CD4-positive, alpha-beta T cell (primary cell): ENCODE measurements at regions of chr19 and their contacts with region 1.

Region 1: GRCh38 chr19:14136509-14137281 is at the start of gene ASF1B:
- DNase-seq: peak; percentile 91 to 99 (median 97)
- ATAC-seq: peak; percentile 80
- H3K4me3 ChIP-seq: peak within 1 kb of the TSS; percentile 86
- H3K4me3 Mint-ChIP-seq: peak within 1 kb of the TSS; percentile 97
- H3K27ac ChIP-seq: peak within 1 kb of the TSS; percentile 92 to 94
- H3K27ac Mint-ChIP-seq: peak within 1 kb of the TSS; percentile 87
- H3K4me1 ChIP-seq: peaks cover 34% of the 10 kb centered on the region
- H3K4me1 Mint-ChIP-seq: peaks cover 34% of the 10 kb centered on the region
- H3K27me3 ChIP-seq: no peaks in the 10 kb centered on the region
- H3K27me3 Mint-ChIP-seq: no peaks in the 10 kb centered on the region
- CTCF ChIP-seq: peak; percentile 99
- total RNA-seq, gene ASF1B: 0.59 to 0.77 TPM

Region 2: DNA sequence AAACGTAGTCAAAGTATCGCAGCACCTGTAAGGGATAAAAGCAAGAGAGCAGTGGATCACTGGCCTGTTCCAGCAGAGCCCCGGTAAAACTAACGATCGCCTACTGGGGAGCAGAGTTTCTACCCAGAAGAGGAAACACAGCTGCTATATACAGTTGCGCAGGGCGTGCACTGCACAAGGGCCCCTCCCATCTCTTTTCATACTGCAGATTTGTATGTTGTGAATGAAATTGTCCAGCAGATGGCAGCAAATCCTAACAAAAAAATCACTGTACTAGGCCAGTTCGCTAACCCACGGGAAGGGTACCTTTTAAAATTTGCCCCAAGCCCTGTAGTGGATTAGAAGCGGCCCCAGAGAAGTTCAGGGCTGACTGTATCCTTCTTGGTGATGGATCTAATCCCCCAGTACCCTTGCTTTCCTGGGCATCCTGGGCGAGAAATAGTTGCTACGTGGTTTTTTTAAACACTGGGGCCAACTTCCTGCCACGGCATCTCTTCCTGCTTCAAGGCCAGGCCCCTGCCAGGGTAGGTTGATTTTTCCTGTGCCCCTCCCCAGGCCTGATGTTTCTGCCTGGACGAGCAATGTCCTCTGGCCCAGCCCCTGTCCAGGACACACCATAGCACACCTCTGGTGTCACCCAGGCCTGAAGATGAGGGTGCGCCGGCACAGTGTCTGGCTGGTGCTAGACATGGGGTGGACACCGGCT is 859.4 kb before region 1 on chr19:
- CTCF ChIA-PET with region 1: no interaction called
- POLR2A ChIA-PET with region 1: no interaction called
- intact Hi-C with region 1: loop called in 1 of 2 experiments (anchors 5 kb)
- DNase-seq: peak; percentile 22 to 90 (median 48)
- ATAC-seq: peak; percentile 89
- H3K4me3 ChIP-seq: peak overlapping the region; percentile 15
- H3K4me3 Mint-ChIP-seq: peak overlapping the region; percentile 42
- H3K27ac ChIP-seq: peak overlapping the region in 1 of 2 donors; percentile 66
- H3K27ac Mint-ChIP-seq: peak overlapping the region; percentile 65
- H3K4me1 ChIP-seq: peaks cover 29% of the 10 kb centered on the region
- H3K4me1 Mint-ChIP-seq: peaks cover 22% of the 10 kb centered on the region
- H3K27me3 ChIP-seq: no peaks in the 10 kb centered on the region
- H3K27me3 Mint-ChIP-seq: no peaks in the 10 kb centered on the region
- CTCF ChIP-seq: peak; percentile 68

Region 3: DNA sequence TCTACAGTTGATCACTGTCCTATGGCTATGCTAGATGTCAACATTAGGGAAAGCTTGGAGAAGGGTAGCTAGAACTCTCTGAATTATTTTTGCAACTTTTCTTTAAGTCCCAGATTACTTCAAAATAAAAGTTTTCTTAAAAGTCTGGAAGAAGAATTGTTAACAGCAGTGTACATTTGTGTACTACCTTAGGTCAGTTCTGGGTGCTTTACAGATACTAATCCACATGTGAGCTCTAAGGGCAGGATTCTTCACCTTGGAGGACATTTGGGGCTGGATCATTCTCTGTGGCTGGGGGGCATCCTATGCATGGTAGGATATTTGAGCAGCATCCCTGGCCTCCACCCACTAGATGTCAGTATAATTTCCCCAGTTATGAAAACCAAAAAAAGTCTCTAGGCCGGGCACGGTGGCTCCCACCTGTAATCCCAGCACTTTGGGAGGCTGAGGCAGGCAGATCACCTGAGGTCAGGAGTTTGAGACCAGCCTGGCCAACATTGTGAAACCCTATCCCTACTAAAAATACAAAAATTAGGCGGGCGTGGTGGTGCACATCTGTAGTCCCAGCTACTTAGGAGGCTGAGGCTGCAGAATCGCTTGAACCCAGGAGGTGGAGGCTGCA is 233.6 kb before region 1 on chr19:
- CTCF ChIA-PET with region 1: no interaction called
- POLR2A ChIA-PET with region 1: no interaction called
- intact Hi-C with region 1: no loop called
- DNase-seq: peak in 6 of 14 experiments; percentile 19 to 60 (median 52)
- ATAC-seq: no peak
- H3K4me3 ChIP-seq: no peak overlapping the region
- H3K4me3 Mint-ChIP-seq: peak overlapping the region; percentile 65
- H3K27ac ChIP-seq: no peak overlapping the region
- H3K27ac Mint-ChIP-seq: no peak overlapping the region
- H3K4me1 ChIP-seq: peaks cover 24% of the 10 kb centered on the region
- H3K4me1 Mint-ChIP-seq: peaks cover 13% of the 10 kb centered on the region
- H3K27me3 ChIP-seq: no peaks in the 10 kb centered on the region
- H3K27me3 Mint-ChIP-seq: no peaks in the 10 kb centered on the region
- CTCF ChIP-seq: no peak

Region 4: DNA sequence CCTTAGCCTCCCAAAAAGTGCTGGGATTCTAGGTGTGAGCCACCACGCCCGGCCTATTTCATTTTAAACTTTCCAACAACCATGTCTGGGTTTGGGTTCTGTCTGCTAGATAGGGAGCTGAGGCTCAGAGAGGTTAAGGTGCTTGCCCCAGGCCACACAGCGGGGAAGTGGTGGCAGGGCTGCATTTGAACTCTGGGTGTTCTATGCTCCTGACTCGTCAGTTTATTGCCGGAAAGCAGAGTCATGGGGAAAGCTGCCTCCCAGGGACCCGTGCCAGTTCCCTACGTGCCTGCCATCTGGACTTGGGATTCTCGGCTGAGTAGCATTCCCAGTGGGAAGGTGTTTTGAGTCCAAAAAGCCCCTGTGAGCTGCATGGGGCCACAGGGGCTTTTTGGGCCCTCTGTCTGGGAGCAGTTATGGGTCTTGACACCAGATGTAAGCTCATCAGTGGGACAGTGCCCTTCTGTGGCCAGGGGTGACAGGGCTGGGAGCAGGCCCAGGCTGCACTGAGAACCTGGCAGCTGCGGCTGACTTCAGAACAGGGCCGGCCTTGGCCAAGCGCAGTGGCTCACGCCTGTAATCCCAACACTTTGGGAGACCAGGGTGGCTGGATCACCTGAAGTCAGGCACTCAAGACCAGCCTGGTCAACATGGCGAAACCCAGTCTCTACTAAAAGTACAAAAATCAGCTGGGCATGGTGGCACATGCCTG is 141.5 kb before region 1 on chr19:
- CTCF ChIA-PET with region 1: no interaction called
- POLR2A ChIA-PET with region 1: no interaction called
- intact Hi-C with region 1: no loop called
- DNase-seq: no peak
- ATAC-seq: no peak
- H3K4me3 ChIP-seq: no peak overlapping the region
- H3K4me3 Mint-ChIP-seq: no peak overlapping the region
- H3K27ac ChIP-seq: no peak overlapping the region
- H3K27ac Mint-ChIP-seq: no peak overlapping the region
- H3K4me1 ChIP-seq: peaks cover 52% of the 10 kb centered on the region
- H3K4me1 Mint-ChIP-seq: peaks cover 24% of the 10 kb centered on the region
- H3K27me3 ChIP-seq: no peaks in the 10 kb centered on the region
- H3K27me3 Mint-ChIP-seq: no peaks in the 10 kb centered on the region
- CTCF ChIP-seq: no peak

Region 5: GRCh38 chr19:14015524-14016035 is 121.1 kb before region 1 on chr19:
- CTCF ChIA-PET with region 1: no interaction called
- POLR2A ChIA-PET with region 1: no interaction called
- intact Hi-C with region 1: no loop called
- DNase-seq: peak in 1 of 14 experiments; percentile 12
- ATAC-seq: no peak
- H3K4me3 ChIP-seq: no peak overlapping the region
- H3K4me3 Mint-ChIP-seq: no peak overlapping the region
- H3K27ac ChIP-seq: no peak overlapping the region
- H3K27ac Mint-ChIP-seq: no peak overlapping the region
- H3K4me1 ChIP-seq: peaks cover 3% of the 10 kb centered on the region
- H3K4me1 Mint-ChIP-seq: no peaks in the 10 kb centered on the region
- H3K27me3 ChIP-seq: no peaks in the 10 kb centered on the region
- H3K27me3 Mint-ChIP-seq: no peaks in the 10 kb centered on the region
- CTCF ChIP-seq: no peak

Region 6: DNA sequence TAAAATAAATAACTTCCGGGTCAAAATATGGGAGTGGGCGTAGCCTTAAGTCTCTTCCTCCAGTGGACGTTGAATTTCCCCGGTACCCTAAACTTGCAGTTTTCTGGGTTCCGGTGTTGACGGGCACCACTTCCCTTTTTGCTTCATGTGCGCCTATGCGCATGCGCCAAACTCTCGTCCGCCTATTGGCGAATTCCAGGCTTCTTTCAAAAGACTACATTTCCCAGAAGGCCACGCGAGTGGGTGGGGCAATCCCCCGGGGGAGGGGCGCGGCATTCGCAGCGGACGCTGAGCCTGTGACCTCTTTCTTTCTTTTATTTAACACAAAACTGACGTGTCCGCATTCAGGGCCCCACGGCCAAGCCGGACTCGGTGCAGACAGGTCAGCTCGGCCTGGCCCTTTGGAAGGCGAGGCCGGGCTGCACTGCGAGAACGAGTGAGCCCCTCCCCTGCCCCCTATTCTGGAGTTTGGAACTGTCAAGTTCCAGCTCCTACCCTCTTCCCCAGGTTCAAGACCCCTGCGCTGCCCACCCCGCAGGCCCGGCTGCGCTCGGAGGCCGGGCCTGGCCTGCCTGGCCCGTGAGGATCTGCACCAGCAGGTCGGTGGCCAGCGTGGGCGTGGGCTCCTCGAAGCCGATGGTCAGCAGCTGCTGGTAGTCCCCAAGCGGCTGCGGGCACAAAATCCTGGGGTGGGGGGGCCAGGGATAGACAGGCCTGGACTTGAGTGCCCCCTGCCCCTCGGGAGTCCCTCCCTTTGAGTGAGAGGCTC is 55.2 kb before region 1 on chr19:
- CTCF ChIA-PET with region 1: interaction called, 26 read pairs
- POLR2A ChIA-PET with region 1: interaction called, 33 read pairs
- intact Hi-C with region 1: loop called (anchors 2 kb)
- DNase-seq: peak; percentile 98 to 100 (median 99)
- ATAC-seq: peak; percentile 94
- H3K4me3 ChIP-seq: peak overlapping the region; percentile 81
- H3K4me3 Mint-ChIP-seq: peak overlapping the region; percentile 91
- H3K27ac ChIP-seq: peak overlapping the region; percentile 73 to 74
- H3K27ac Mint-ChIP-seq: peak overlapping the region; percentile 73
- H3K4me1 ChIP-seq: peaks cover 23% of the 10 kb centered on the region
- H3K4me1 Mint-ChIP-seq: peaks cover 14% of the 10 kb centered on the region
- H3K27me3 ChIP-seq: no peaks in the 10 kb centered on the region
- H3K27me3 Mint-ChIP-seq: no peaks in the 10 kb centered on the region
- CTCF ChIP-seq: no peak

Region 7: GRCh38 chr19:14167576-14168138 is 31.0 kb after region 1 on chr19:
- CTCF ChIA-PET with region 1: interaction called, 6 read pairs
- POLR2A ChIA-PET with region 1: interaction called, 15 read pairs
- intact Hi-C with region 1: no loop called
- DNase-seq: peak in 10 of 14 experiments; percentile 27 to 66 (median 44)
- ATAC-seq: peak; percentile 80
- H3K4me3 ChIP-seq: peak overlapping the region; percentile 54
- H3K4me3 Mint-ChIP-seq: peak overlapping the region; percentile 89
- H3K27ac ChIP-seq: peak overlapping the region; percentile 24 to 32
- H3K27ac Mint-ChIP-seq: peak overlapping the region; percentile 84
- H3K4me1 ChIP-seq: peaks cover 37% of the 10 kb centered on the region
- H3K4me1 Mint-ChIP-seq: peaks cover 27% of the 10 kb centered on the region
- H3K27me3 ChIP-seq: no peaks in the 10 kb centered on the region
- H3K27me3 Mint-ChIP-seq: no peaks in the 10 kb centered on the region
- CTCF ChIP-seq: no peak

Region 8: GRCh38 chr19:14366498-14366915 is 229.8 kb after region 1 on chr19:
- CTCF ChIA-PET with region 1: interaction called, 13 read pairs
- POLR2A ChIA-PET with region 1: interaction called, 14 read pairs
- intact Hi-C with region 1: loop called in 1 of 2 experiments (anchors 10 kb)
- DNase-seq: peak; percentile 86 to 98 (median 92)
- ATAC-seq: peak; percentile 58
- H3K4me3 ChIP-seq: peak overlapping the region; percentile 24
- H3K4me3 Mint-ChIP-seq: peak overlapping the region; percentile 82
- H3K27ac ChIP-seq: peak overlapping the region; percentile 97 to 99
- H3K27ac Mint-ChIP-seq: peak overlapping the region; percentile 84
- H3K4me1 ChIP-seq: peaks cover 95% of the 10 kb centered on the region
- H3K4me1 Mint-ChIP-seq: peaks cover 65% of the 10 kb centered on the region
- H3K27me3 ChIP-seq: no peaks in the 10 kb centered on the region
- H3K27me3 Mint-ChIP-seq: no peaks in the 10 kb centered on the region
- CTCF ChIP-seq: no peak

Region 9: DNA sequence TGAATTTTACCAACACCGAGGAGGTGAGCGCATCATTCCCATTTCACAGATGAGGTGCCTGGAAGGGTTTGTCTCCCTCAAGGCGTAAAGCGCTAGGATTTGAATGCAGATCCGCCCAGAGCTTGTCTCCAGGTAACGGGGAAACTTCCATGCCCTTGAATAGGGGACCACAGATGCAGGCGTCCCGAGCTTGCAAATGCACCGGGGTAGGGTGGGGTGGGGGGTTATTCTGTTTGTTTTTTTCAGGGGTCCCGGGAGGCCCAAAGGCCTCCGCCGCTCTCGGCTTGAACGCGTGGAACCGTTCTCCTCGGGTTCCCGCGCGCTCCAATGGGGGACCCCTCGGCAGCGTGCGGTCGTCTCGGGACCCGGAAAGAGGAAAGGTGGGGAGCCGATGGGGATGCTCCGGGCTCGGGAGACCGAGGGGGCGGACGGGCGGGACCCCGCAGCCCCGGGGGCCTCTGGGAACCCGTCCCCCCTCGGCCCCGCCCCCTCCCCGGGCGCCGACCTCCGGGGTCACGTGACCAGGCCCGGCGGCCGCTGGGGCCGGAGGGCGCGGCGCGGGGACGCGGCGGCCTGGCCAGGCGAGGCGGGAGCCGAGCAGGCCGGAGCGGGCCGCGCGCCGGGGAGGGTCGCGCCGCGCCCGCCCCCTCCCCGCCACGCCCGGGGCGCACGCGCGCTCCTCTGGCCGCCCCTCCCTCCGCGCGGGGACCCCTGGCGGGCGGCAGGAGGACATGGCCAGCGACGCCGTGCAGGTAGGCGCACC is 296.3 kb after region 1 on chr19 and contains the start of gene PKN1:
- CTCF ChIA-PET with region 1: interaction called, 10 read pairs
- POLR2A ChIA-PET with region 1: no interaction called
- intact Hi-C with region 1: no loop called
- DNase-seq: peak in 10 of 14 experiments; percentile 18 to 70 (median 47)
- ATAC-seq: peak; percentile 3
- H3K4me3 ChIP-seq: peak within 1 kb of the TSS; percentile 85
- H3K4me3 Mint-ChIP-seq: peak within 1 kb of the TSS; percentile 90
- H3K27ac ChIP-seq: peak within 1 kb of the TSS; percentile 74 to 82
- H3K27ac Mint-ChIP-seq: peak within 1 kb of the TSS; percentile 91
- H3K4me1 ChIP-seq: peaks cover 42% of the 10 kb centered on the region
- H3K4me1 Mint-ChIP-seq: peaks cover 44% of the 10 kb centered on the region
- H3K27me3 ChIP-seq: no peaks in the 10 kb centered on the region
- H3K27me3 Mint-ChIP-seq: no peaks in the 10 kb centered on the region
- CTCF ChIP-seq: no peak
- total RNA-seq, gene PKN1: 171 TPM